ENCODE measurements at regions of chr6 and their contacts with region 1.

Region 1: DNA sequence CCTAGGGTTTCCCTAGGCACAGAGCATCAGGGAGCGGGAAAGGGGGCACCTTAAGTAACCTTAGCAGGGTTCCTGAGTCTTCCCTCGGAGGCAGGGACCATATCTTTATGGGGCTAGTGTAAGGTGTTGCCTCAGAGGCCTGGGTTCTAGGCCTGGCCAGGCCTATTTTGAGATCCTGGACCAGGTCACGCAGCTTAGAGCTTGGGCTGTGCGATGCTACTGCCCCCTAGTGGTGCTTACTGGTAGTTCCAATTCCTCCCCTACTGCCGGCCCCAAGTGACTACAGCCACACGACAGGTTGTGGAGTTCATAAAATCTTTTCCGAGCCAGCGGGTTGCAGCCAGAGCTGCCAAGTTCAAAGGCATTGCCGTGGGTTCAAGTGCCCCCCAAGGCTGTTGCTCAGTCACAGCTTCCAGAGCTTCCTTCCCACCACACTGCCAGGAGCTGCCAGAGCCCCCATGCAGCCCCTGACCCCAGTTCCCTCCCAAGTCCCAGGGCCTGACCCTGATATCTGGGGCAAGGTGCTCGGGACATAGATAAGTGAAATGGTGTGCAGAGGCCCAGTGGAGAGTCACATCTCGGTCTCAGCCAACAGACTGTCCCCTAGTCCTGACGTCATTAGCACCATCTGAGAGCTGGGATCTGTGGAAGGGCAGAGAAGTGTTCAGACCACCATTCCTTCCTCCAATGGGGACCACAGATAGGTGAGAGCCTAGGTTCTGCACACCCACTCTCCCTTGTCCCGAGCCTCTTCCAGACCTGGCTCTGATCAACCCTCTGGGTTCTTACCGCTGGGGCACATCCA is 3.3 kb downstream of the LRRC73 start:
- DNase-seq: peak; percentile 58 to 81
- ATAC-seq: peak; percentile 6 to 72 (median 52)
- H3K4me3 ChIP-seq: no peak overlapping the region
- H3K27ac ChIP-seq: peak overlapping the region in 2 of 10 donors; percentile 21 to 23
- H3K4me1 ChIP-seq: peaks cover 7 to 62% (median 42%) of the 10 kb centered on the region in 9 donors
- H3K27me3 ChIP-seq: peaks cover 0 to 27% (median 0%) of the 10 kb centered on the region in 7 donors
- CTCF ChIP-seq: peak; percentile 90 to 99 (median 96)

Region 2: DNA sequence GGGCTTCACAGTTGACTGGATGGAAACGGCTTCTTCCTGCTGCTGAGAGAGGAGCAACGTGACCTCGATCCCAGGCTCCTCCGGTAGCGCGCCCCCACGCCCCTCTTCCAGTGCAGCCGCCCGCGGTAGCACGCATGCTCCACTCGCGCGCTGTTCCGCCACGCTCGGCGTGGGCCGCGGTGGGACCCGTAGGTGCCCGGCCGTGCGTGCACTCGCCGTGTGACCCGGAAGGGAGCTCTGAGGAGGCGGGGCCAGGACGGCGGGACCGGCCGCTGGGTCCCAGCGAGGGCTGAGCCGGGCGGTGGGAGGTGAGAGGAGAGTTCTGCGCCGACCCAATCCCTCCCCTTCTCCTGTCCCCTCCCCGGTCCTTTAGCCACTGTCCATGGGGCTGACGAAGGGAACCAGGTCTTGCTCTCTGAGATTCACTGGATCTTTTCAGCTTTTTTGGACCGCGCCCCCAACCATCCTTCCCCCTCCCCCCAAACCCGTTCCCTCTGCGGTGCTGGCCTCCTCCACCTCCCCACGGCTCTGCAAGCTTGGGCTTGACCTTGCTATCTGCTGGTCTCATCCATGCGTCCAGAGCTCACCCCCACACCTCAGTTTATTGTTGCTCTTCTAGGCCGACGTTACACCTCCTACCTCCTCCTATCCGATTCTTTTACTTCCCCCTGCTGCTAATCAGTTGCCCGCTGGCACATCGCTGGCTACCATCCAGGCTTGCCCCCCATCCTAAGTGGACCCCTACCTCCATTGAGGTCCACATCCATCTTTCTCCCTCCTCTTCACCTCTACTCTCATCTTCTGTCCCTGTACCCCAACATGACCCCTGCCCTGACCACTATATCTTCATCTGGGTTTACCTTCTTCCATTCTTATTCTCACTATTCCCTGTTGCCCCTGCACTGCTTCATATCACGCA is 324.7 kb before region 1 on chr6 and contains the start of gene CUL9:
- intact Hi-C with region 1: loop called in 1 of 10 experiments (anchors 10 kb)
- DNase-seq: peak; percentile 86 to 90
- ATAC-seq: peak; percentile 95 to 99 (median 97)
- H3K4me3 ChIP-seq: peak within 1 kb of the TSS; percentile 45 to 89 (median 78)
- H3K27ac ChIP-seq: peak within 1 kb of the TSS in 9 of 10 donors; percentile 67 to 86 (median 76)
- H3K4me1 ChIP-seq: peaks cover 0 to 30% (median 17%) of the 10 kb centered on the region in 9 donors
- H3K27me3 ChIP-seq: no peaks in the 10 kb centered on the region
- CTCF ChIP-seq: no peak
- total RNA-seq, gene CUL9: 7.8 to 17.1 (median 13.4) TPM

Region 3: DNA sequence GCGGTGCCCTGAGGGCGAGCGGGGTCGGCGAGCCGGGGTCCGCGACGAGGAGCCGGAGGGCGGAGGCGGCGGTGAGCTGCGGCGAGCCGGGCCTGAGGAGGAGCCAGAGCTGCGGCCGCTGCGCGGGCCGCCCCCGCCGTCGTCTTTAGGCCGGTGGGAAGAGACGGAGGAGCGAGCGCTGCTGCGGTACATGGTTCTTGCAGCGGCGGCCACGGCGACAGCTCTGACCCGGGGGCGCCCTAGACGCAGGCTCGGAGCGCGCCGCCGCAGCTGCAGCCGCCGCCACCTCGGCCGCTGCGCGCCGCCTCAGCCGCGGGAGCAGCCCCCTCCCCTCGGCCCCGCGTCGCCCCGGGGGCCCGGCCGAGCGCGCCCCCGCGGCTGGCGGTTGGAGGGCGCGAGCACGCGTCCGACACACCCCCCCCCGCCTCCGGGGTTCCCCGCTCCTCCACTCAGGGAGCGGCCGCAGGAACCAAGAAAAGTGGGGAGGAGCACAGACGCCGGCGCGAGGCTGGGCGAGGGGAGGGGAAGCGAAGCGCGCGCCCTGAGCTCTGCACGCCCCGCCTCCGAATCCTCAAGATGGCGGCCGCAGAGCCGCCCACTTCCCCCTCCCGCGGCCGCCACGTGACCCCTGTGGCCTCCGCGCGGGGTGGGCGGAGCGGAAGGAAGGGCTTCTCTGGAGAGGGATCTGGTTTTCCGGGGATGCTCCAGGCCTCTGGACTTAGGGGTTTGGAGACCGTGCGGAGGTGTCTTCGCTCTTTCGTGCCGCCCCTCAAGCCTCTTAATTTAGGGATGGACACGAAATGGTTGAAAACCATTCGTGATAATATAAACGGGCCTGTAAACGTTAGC is 137.5 kb before region 1 on chr6 and contains the start of gene ZNF318:
- intact Hi-C with region 1: loop called in 1 of 10 experiments (anchors 5 kb)
- DNase-seq: peak; percentile 96
- ATAC-seq: peak; percentile 98 to 100 (median 99)
- H3K4me3 ChIP-seq: peak within 1 kb of the TSS; percentile 56 to 94 (median 82)
- H3K27ac ChIP-seq: peak within 1 kb of the TSS; percentile 69 to 96 (median 87)
- H3K4me1 ChIP-seq: peaks cover 0 to 35% (median 23%) of the 10 kb centered on the region in 9 donors
- H3K27me3 ChIP-seq: no peaks in the 10 kb centered on the region
- CTCF ChIP-seq: no peak
- total RNA-seq, gene ZNF318: 9.3 to 20.4 (median 14.0) TPM

Region 4: DNA sequence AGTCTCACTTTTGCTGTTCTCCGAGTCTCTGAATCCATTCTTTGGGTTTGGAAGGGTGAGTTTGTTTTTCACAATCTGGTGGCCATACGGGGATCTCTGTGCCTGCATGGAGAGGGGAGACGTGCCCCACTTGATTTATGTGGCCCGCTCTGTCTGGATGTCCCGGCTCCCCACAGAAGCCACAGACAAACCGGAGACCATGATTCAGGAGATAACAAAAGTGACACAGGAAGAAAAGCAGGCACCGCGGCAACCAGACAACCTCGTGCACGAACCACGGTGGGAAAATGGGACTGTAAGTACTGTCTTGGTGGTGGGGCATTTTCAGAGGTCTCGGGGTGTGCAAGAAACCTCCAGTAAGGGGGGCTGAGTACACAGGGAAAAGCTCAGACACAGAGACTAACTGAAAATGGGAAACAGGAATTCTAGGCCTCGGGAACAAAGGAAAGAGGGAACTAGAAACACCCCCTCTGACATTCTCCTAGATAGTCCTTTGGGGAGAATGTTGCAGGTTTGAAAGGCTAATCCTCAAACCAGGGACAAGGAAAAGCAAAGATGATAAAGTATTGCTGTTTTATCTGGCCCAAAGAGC is 115.3 kb before region 1 on chr6:
- intact Hi-C with region 1: loop called in 5 of 10 experiments (anchors 2 to 10 kb)
- DNase-seq: no peak
- ATAC-seq: no peak
- H3K4me3 ChIP-seq: no peak overlapping the region
- H3K27ac ChIP-seq: no peak overlapping the region
- H3K4me1 ChIP-seq: peaks cover 0 to 7% (median 0%) of the 10 kb centered on the region in 9 donors
- H3K27me3 ChIP-seq: peaks cover 0 to 50% (median 5%) of the 10 kb centered on the region in 7 donors
- CTCF ChIP-seq: no peak

Region 5: DNA sequence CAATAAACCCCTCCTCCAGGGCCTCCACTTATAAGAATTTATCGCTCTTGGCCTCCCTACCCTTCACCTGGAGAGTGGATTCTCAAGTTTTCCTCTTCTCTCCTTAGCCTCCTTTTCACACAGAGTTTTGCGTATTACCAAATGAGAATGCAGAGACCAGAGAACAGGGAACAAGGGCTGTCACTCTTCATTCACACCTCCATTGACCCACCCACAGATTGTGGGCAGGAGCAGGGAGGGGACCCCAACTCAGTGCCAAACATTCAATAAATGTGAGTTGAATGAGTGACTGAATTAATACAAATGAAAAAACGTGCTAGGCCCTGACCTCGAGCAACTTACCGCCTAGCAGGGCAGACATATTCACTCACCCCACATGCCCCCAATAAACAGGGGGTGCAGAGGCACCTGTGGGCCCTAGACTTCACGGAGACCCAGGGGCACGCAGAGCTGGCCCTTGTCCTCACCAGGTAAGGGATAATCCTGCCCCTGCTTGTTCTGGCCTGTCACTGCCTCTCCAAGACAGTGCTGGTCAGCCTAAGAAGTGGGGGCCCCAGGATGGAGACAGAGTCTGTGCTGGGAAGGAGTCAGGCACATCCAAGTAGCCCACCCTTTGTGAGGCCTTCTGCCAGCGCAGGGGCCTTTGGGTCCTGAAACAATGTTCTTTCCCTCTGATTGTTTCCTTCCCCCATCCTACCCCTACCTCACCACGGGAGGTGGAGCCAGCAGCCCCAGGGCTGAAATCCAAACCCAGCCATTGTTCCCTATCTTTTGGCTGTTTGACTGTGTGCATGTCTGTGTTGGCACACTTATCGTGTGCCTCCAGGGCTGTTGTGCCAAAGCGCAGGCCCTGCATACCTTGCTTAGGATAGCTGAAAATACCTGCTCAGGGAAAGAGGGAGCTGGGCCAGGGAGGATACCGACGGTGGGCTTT is 37.9 kb before region 1 on chr6:
- intact Hi-C with region 1: loop called in 1 of 10 experiments (anchors 5 kb)
- DNase-seq: peak; percentile 45 to 51
- ATAC-seq: peak; percentile 77 to 95 (median 88)
- H3K4me3 ChIP-seq: no peak overlapping the region
- H3K27ac ChIP-seq: peak overlapping the region in 9 of 10 donors; percentile 28 to 90 (median 73)
- H3K4me1 ChIP-seq: peaks cover 0 to 37% (median 5%) of the 10 kb centered on the region in 9 donors
- H3K27me3 ChIP-seq: peaks cover 0 to 6% (median 0%) of the 10 kb centered on the region in 7 donors
- CTCF ChIP-seq: no peak

Region 6: DNA sequence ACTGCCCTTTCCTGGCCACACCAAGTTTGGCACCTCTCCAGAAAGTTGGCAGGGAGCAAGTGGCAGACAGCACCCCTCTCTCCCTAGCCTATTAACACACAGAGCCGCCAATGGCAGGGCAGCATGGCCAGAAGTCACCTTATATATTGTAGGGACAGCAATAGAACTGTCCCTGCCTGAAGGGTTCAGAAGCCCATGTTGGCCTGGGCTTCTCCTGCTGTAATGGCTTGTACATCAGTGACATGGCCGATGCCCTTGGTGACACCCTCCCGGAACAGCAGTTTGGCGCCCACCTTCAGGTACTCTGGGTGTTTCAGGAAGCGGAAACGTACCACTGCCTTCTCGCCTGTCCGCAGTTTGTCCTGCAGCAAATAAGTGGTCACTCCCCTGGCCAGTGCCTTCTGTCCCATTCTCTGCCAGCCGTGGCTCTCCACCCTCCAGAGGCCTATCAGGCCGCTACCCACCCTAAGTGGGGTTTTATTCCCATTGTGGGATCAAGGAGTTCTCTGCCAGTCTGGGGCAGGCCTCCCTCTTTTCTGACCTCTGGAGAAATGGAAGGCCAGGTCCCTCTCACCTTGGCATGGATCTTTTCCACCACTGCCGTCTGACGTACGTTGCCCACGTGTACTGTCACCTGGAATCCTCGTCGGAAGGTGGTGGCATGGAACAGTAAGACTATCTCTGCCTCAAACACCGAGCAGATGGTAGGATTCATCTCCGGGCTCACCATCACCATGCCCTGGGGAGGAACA is 114.7 kb after region 1 on chr6:
- intact Hi-C with region 1: no loop called
- DNase-seq: no peak
- ATAC-seq: peak in 2 of 8 donors; percentile 5 to 25
- H3K4me3 ChIP-seq: no peak overlapping the region
- H3K27ac ChIP-seq: no peak overlapping the region
- H3K4me1 ChIP-seq: peaks cover 0 to 13% (median 5%) of the 10 kb centered on the region in 9 donors
- H3K27me3 ChIP-seq: no peaks in the 10 kb centered on the region
- CTCF ChIP-seq: no peak